Sigmoid colon (tissue), 7 donors: ENCODE measurements at regions of chr19 and their contacts with region 1.

Region 1: DNA sequence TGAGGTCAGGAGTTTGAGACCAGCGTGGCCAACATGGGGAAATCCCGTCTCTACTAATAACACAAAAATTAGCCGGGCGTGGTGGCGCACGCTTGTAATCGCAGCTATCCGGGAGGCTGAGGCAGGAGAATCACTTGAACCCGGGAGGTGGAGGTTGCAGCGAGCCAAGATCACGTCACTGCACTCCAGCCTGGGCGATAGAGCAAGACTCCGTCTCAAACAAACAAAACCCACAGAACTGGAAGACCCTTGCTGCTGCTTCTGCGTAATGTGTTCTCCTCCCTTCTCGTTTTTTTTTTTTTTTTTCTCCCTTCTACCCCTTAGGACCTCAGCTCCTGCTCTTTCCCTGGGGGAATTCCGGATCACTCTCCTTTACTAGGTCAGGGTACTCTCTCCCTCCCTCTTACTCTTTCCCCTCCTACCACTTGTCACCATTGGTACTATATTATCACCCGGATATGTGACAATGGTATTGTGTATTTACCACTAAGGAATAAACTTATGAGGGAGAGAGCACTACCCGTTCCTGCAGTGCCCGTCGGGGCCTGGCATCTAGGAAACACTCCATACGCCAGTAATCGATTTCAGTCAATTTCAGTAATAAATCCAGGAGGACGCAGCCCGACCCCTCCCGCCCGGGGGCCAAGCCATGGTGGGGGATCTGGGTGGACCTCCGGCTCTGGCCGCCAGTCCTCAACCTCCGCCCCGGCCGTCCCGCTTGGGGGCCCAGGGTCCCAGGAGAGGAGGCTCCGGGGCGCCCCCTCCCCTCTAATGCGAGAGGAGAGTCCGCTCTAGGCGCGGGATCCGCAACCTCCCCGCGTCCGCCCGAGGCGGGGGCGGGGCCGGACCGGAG is 429 bp upstream of the GARRE1 start:
- DNase-seq: peak; percentile 91
- H3K4me3 ChIP-seq: peak overlapping the region; percentile 90 to 99 (median 96)
- H3K27ac ChIP-seq: peak overlapping the region; percentile 91 to 95 (median 95)
- H3K4me1 ChIP-seq: peaks cover 0 to 22% (median 17%) of the 10 kb centered on the region in 4 donors
- H3K27me3 ChIP-seq: no peaks in the 10 kb centered on the region
- CTCF ChIP-seq: no peak
- EP300 ChIP-seq: no peak
- POLR2A ChIP-seq: peak; percentile 53 to 77

Region 2: GRCh38 chr19:34220472-34221063 is 33.4 kb before region 1 on chr19:
- intact Hi-C with region 1: loop called (anchors 1 kb)
- DNase-seq: peak; percentile 69
- H3K4me3 ChIP-seq: no peak overlapping the region
- H3K27ac ChIP-seq: no peak overlapping the region
- H3K4me1 ChIP-seq: peaks cover 0 to 15% (median 12%) of the 10 kb centered on the region in 4 donors
- H3K27me3 ChIP-seq: no peaks in the 10 kb centered on the region
- CTCF ChIP-seq: peak in 3 of 4 experiments; percentile 46 to 66 (median 49)
- EP300 ChIP-seq: no peak
- POLR2A ChIP-seq: no peak